Activated naive CD4-positive, alpha-beta T cell treated with anti-CD3 and anti-CD28 coated beads for 36 hours (primary cell): ENCODE measurements at regions of chr6 and their contacts with region 1.

Region 1: GRCh38 chr6:69866770-69867638 is 648 bp downstream of the COL19A1 start:
- DNase-seq: peak; percentile 64
- H3K4me3 Mint-ChIP-seq: peak overlapping the region; percentile 70
- H3K27ac Mint-ChIP-seq: no peak overlapping the region
- H3K4me1 Mint-ChIP-seq: peaks cover 20% of the 10 kb centered on the region
- H3K27me3 Mint-ChIP-seq: peaks cover 5% of the 10 kb centered on the region

Region 2: DNA sequence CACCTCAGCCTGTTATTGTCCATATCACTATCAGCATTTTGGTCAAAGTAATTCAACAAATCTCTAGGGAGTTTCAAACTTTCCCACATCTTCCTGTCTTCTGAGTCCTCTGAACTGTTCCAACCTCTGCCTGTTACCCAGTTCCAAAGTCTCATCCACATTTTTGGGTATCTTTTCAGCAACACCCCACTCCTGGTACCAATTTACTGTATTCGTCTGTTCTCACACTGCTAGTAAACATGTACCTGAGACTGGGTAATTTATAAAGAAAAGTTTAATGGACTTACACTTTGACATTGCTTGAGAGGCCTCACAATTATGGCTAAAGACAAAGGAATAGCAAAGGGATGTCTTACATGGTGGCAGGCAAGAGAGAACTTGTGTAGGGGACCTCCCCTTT is 1007.8 kb before region 1 on chr6:
- CTCF ChIA-PET with region 1: no interaction called
- intact Hi-C with region 1: no loop called
- DNase-seq: no peak
- H3K4me3 Mint-ChIP-seq: no peak overlapping the region
- H3K27ac Mint-ChIP-seq: no peak overlapping the region
- H3K4me1 Mint-ChIP-seq: no peaks in the 10 kb centered on the region
- H3K27me3 Mint-ChIP-seq: no peaks in the 10 kb centered on the region

Region 3: DNA sequence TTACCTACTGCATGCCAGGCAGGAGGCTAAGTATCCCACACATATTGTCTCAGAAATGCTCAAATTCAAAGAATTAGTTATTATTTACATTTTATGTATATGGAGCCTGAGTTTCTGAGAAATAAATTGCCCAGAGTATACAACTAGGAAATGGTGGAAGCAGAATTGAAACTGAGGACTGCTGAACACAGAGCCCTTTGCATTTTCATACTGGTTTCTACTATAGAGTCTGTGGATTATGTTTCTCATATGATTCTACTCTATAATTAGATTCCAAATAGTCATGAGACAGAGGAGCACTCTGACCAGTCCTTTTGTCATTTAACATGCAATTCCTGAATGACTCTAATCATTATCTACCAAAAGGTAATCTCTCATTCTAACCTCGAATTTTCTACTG is 324.5 kb before region 1 on chr6:
- CTCF ChIA-PET with region 1: no interaction called
- intact Hi-C with region 1: no loop called
- DNase-seq: no peak
- H3K4me3 Mint-ChIP-seq: no peak overlapping the region
- H3K27ac Mint-ChIP-seq: no peak overlapping the region
- H3K4me1 Mint-ChIP-seq: no peaks in the 10 kb centered on the region
- H3K27me3 Mint-ChIP-seq: no peaks in the 10 kb centered on the region

Region 4: DNA sequence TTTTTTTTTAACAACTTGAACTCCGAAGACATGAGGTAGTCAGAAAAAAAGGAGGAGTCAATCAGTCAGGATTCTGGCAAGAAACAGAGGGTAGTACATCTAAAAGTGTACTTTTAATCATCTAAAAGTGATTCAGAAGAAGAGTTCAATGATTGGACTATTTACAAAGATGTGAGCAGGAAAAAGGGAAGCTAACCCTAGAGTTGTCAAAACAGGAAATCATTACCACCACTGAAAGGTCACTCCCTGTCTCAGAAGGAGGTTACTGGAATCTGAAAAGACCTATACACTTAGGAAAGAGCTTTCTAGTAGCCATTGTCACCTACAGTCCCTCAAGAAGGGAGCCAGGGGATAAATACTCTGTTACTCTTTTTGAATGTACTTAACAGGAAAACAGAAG is 53.5 kb before region 1 on chr6:
- CTCF ChIA-PET with region 1: interaction called, 4 read pairs
- intact Hi-C with region 1: loop called (anchors 1 kb)
- DNase-seq: no peak
- H3K4me3 Mint-ChIP-seq: no peak overlapping the region
- H3K27ac Mint-ChIP-seq: peak overlapping the region; percentile 75
- H3K4me1 Mint-ChIP-seq: peaks cover 54% of the 10 kb centered on the region
- H3K27me3 Mint-ChIP-seq: no peaks in the 10 kb centered on the region

Region 5: GRCh38 chr6:69973138-69973537 is 106.1 kb after region 1 on chr6:
- CTCF ChIA-PET with region 1: no interaction called
- intact Hi-C with region 1: no loop called
- DNase-seq: no peak
- H3K4me3 Mint-ChIP-seq: no peak overlapping the region
- H3K27ac Mint-ChIP-seq: no peak overlapping the region
- H3K4me1 Mint-ChIP-seq: no peaks in the 10 kb centered on the region
- H3K27me3 Mint-ChIP-seq: peaks cover 7% of the 10 kb centered on the region

Region 6: GRCh38 chr6:70166088-70166958 is 299.3 kb after region 1 on chr6:
- CTCF ChIA-PET with region 1: no interaction called
- intact Hi-C with region 1: loop called (anchors 10 kb)
- DNase-seq: peak; percentile 56
- H3K4me3 Mint-ChIP-seq: no peak overlapping the region
- H3K27ac Mint-ChIP-seq: no peak overlapping the region
- H3K4me1 Mint-ChIP-seq: no peaks in the 10 kb centered on the region
- H3K27me3 Mint-ChIP-seq: peaks cover 29% of the 10 kb centered on the region